Ascending aorta (tissue), 2 donors: ENCODE measurements at regions of chr20 and their contacts with region 1.

Region 1: DNA sequence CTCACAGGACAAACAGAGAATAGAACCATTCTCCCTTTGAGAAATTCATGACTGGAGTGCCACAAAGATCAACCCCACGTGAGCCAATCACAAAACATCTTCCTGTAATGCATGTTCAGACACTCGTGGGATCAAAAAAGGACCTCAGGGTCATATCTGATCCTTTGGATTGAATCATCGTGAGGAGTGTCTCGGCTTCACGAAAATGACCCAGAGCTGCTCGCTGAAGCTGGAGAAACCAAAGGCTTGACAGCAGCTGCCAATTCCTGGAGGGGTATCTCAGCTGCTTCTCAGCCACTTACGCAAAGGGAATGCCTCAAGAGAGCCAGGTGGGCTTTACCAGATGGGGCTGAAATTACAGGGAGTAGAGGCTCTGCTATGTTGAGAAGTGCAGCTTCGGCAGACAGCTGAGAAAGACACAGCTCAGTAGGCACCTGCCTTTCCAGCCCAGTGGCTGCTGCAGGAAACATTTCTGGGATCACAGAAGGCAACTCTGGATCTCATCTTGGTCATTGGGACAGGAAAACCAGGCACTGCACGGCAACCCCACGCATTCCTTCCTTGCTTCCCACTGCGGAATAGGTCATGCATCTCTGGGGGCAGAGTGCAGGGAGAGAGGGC is 813.1 kb downstream of the KIF16B start:
- DNase-seq: no peak
- H3K4me3 ChIP-seq: no peak overlapping the region
- H3K27ac ChIP-seq: peak overlapping the region; percentile 25 to 36
- H3K4me1 ChIP-seq: peaks cover 0 to 24% of the 10 kb centered on the region in 2 donors
- H3K27me3 ChIP-seq: no peaks in the 10 kb centered on the region
- CTCF ChIP-seq: no peak

Region 2: GRCh38 chr20:15673206-15673605 is 86.9 kb before region 1 on chr20:
- intact Hi-C with region 1: loop called (anchors 5 kb)
- DNase-seq: no peak
- H3K4me3 ChIP-seq: no peak overlapping the region
- H3K27ac ChIP-seq: peak overlapping the region; percentile 51 to 68
- H3K4me1 ChIP-seq: peaks cover 0 to 11% of the 10 kb centered on the region in 2 donors
- H3K27me3 ChIP-seq: no peaks in the 10 kb centered on the region
- CTCF ChIP-seq: no peak

Region 3: GRCh38 chr20:15716256-15716655 is 43.9 kb before region 1 on chr20:
- intact Hi-C with region 1: no loop called
- DNase-seq: no peak
- H3K4me3 ChIP-seq: no peak overlapping the region
- H3K27ac ChIP-seq: no peak overlapping the region
- H3K4me1 ChIP-seq: no peaks in the 10 kb centered on the region
- H3K27me3 ChIP-seq: no peaks in the 10 kb centered on the region
- CTCF ChIP-seq: no peak

Region 4: DNA sequence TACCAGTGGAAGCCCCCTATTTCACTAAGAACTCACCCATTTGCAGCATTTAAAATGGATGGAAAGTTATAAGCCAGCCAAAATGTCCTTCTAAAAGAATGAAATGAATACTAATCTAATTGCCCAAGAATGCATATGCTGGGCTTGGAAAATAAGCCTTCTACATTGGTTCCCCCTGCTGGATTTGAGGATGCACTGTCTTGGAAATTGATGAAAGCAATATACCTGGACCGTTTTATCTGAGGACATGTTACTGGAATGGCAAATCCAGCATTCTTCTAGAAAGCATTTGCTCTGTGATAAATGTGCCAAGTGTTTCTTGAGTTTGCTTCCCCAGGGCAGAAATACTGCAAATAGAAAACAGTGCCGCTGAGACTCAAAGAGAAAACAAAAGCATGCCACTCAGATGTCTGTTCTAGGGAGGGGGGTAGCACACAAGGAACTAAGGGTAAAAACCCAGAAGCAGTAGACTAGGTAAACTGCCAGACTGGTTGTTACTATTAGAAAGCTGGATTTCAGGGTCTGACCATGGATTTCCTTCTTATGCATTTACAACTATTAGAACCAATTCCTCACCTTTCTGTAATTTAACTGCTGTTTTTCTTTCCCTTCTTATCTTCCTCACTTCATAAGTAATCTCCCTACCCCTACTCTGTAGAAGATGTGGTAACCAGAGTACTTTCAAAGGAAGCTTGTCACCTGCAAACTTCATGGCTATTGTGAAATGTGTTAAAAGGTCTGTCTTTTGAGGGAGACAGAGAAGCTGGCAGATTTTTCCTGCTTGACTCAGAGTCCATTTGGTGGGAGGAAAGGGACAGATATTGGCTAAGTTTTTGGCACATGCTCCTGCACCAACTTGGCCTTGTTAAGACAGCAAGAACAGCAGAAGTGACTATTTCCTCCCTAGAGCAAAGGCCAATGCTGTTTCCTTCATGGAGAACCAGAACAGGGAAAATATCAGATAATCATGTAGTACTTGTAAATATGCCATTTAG is 170.5 kb after region 1 on chr20:
- intact Hi-C with region 1: loop called (anchors 5 kb)
- DNase-seq: no peak
- H3K4me3 ChIP-seq: no peak overlapping the region
- H3K27ac ChIP-seq: peak overlapping the region; percentile 28 to 37
- H3K4me1 ChIP-seq: peaks cover 4% of the 10 kb centered on the region in 2 donors
- H3K27me3 ChIP-seq: no peaks in the 10 kb centered on the region
- CTCF ChIP-seq: peak; percentile 33 to 68 (median 41)

Region 5: DNA sequence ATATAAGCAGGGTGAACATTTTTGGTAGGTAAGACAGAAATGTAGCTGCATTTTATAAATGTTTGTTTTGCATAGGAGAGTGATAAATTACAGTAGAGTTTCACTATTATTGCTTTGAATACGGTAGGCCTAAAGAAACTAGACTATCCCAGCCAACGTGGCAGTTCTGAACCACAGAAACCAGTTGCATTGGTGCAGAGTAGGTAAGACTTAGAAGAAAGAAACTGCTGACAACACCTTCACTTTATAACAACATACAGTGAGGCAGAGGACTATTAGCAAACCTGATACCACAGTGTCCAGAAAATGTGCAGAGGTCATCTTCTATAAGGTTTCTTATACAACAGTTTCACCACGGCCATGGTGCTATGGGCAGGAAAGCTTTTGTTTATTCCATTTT is 247.1 kb after region 1 on chr20:
- intact Hi-C with region 1: no loop called
- DNase-seq: no peak
- H3K4me3 ChIP-seq: no peak overlapping the region
- H3K27ac ChIP-seq: no peak overlapping the region
- H3K4me1 ChIP-seq: no peaks in the 10 kb centered on the region
- H3K27me3 ChIP-seq: no peaks in the 10 kb centered on the region
- CTCF ChIP-seq: no peak

Region 6: GRCh38 chr20:16040742-16041141 is 280.6 kb after region 1 on chr20:
- intact Hi-C with region 1: no loop called
- DNase-seq: no peak
- H3K4me3 ChIP-seq: no peak overlapping the region
- H3K27ac ChIP-seq: no peak overlapping the region
- H3K4me1 ChIP-seq: peaks cover 0 to 3% of the 10 kb centered on the region in 2 donors
- H3K27me3 ChIP-seq: no peaks in the 10 kb centered on the region
- CTCF ChIP-seq: no peak